PC-9 (cell line): ENCODE measurements at regions of chr10 and their contacts with region 1.

Region 1: DNA sequence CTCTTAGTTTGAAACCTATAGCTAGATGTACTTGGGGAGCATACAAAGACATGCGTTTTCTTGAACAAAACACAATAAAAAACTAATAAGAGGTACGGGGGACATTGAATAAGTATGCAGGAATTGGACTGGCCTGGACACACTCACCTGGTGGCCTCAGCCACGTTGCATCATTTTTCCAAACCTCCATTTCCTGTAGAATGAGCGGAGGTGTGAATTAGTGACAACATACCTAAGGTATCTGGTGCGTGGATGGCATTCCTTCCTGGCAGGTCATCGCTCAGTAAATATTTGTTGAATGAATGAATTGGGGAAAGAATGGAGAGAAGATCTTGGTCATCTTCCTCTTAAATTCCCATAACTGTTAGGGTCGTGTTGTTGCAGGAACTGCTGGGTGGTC is 103.2 kb upstream of the CTBP2 start:
- DNase-seq: peak; percentile 67 to 91
- H3K4me3 ChIP-seq: peak overlapping the region; percentile 38; the same call in 1 of the 2 replicates
- H3K27ac ChIP-seq: peak overlapping the region; percentile 92
- H3K4me1 ChIP-seq: peaks cover 42% of the 10 kb centered on the region
- H3K27me3 ChIP-seq: no peaks in the 10 kb centered on the region
- CTCF ChIP-seq: no peak

Region 2: GRCh38 chr10:124916585-124917427 is 346.7 kb before region 1 on chr10:
- CTCF ChIA-PET with region 1: no interaction called
- POLR2A ChIA-PET with region 1: no interaction called
- intact Hi-C with region 1: no loop called
- DNase-seq: peak; percentile 75 to 92
- H3K4me3 ChIP-seq: peak overlapping the region; percentile 92
- H3K27ac ChIP-seq: peak overlapping the region; percentile 64
- H3K4me1 ChIP-seq: peaks cover 28% of the 10 kb centered on the region
- H3K27me3 ChIP-seq: no peaks in the 10 kb centered on the region
- CTCF ChIP-seq: no peak

Region 3: DNA sequence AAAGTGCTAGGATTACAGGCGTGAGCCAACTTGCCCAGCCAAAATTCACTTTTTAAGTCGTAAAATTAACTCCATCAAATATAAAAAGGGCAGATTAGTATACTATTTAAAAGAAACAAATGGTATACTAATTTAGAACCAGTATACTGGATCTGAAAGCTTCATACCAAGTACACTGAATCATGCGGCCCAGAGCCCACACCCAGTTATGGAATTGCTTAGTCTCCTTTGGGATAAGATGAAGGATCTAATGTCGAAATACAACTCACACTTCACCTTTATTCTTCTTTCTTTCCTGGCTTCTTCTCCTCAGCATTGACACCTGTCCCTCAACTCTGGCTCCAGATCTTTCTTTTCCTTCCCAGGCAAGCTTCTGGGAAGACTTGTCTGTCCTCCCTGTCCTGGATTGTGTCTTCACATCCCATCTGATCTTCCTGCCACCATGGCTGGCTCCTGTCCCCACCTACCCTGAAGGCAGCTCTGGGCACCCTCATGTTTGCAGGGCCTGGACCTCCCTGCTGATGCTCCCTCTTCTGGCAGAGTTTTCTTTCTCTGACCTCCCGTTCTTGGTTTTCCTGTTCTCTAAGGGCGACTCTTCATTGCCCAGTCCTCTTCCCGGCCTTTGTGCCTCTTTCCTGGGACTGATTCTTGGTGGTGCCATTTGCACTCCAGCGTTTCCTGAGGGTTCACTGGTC is 45.4 kb before region 1 on chr10:
- CTCF ChIA-PET with region 1: no interaction called
- POLR2A ChIA-PET with region 1: no interaction called
- intact Hi-C with region 1: no loop called
- DNase-seq: peak in 1 of 2 experiments; percentile 8
- H3K4me3 ChIP-seq: no peak overlapping the region
- H3K27ac ChIP-seq: no peak overlapping the region
- H3K4me1 ChIP-seq: peaks cover 13% of the 10 kb centered on the region
- H3K27me3 ChIP-seq: no peaks in the 10 kb centered on the region
- CTCF ChIP-seq: no peak

Region 4: GRCh38 chr10:125231116-125231812 is 32.3 kb before region 1 on chr10:
- CTCF ChIA-PET with region 1: no interaction called
- POLR2A ChIA-PET with region 1: no interaction called
- intact Hi-C with region 1: loop called (anchors 1 kb)
- DNase-seq: peak; percentile 84 to 88
- H3K4me3 ChIP-seq: no peak overlapping the region
- H3K27ac ChIP-seq: peak overlapping the region; percentile 67
- H3K4me1 ChIP-seq: peaks cover 29% of the 10 kb centered on the region
- H3K27me3 ChIP-seq: no peaks in the 10 kb centered on the region
- CTCF ChIP-seq: no peak